Activated B cell treated with CpG ODN at 0.5 μM for 24 hours (primary cell): ENCODE measurements at regions of chr2 and their contacts with region 1.

Region 1: GRCh38 chr2:174577967-174578589 is 19.5 kb downstream of the WIPF1 start:
- DNase-seq: no peak
- ATAC-seq: peak; percentile 74
- H3K4me3 Mint-ChIP-seq: no peak overlapping the region
- H3K27ac Mint-ChIP-seq: peak overlapping the region; percentile 30
- H3K4me1 Mint-ChIP-seq: peaks cover 55% of the 10 kb centered on the region
- H3K27me3 Mint-ChIP-seq: no peaks in the 10 kb centered on the region
- CTCF ChIP-seq: peak; percentile 34

Region 2: GRCh38 chr2:174412256-174412655 is 165.8 kb before region 1 on chr2:
- CTCF ChIA-PET with region 1: no interaction called
- POLR2A ChIA-PET with region 1: no interaction called
- intact Hi-C with region 1: no loop called
- DNase-seq: no peak
- ATAC-seq: no peak
- H3K4me3 Mint-ChIP-seq: no peak overlapping the region
- H3K27ac Mint-ChIP-seq: no peak overlapping the region
- H3K4me1 Mint-ChIP-seq: no peaks in the 10 kb centered on the region
- H3K27me3 Mint-ChIP-seq: no peaks in the 10 kb centered on the region
- CTCF ChIP-seq: no peak

Region 3: GRCh38 chr2:174593574-174594203 is 15.6 kb after region 1 on chr2:
- CTCF ChIA-PET with region 1: interaction called, 69 read pairs
- POLR2A ChIA-PET with region 1: interaction called, 137 read pairs
- intact Hi-C with region 1: loop called (anchors 1 kb)
- DNase-seq: no peak
- ATAC-seq: peak; percentile 65
- H3K4me3 Mint-ChIP-seq: peak overlapping the region; percentile 98
- H3K27ac Mint-ChIP-seq: peak overlapping the region; percentile 99
- H3K4me1 Mint-ChIP-seq: peaks cover 78% of the 10 kb centered on the region
- H3K27me3 Mint-ChIP-seq: no peaks in the 10 kb centered on the region
- CTCF ChIP-seq: no peak

Region 4: DNA sequence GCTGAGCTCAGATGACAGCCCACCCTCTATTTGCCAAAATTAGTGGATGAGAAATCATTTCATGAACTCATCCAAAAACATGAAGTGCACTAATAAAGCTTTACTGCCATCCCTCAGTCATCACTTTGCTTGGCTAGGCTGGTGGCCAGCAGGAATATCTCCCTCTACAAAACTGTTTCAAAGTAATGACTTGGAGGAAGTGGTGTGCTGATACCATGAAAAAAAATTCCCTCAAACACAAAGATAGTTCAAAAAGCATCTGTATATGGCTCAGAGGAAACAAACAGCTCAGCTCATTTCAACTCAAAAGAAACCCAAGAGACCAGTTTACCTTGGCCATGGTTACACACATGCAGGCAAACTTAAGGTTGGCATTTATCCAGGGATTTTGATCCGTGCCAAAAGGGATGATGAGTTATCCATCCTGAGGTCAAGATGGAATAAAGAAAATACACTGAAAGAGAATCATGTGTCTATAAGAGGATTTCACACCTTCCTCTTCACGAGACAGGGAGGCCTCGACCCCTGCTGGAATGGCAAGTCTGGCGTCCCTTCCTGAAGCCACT is 37.9 kb after region 1 on chr2:
- CTCF ChIA-PET with region 1: interaction called, 16 read pairs
- POLR2A ChIA-PET with region 1: no interaction called
- intact Hi-C with region 1: loop called (anchors 5 kb)
- DNase-seq: no peak
- ATAC-seq: peak; percentile 18
- H3K4me3 Mint-ChIP-seq: peak overlapping the region; percentile 63
- H3K27ac Mint-ChIP-seq: peak overlapping the region; percentile 83
- H3K4me1 Mint-ChIP-seq: peaks cover 83% of the 10 kb centered on the region
- H3K27me3 Mint-ChIP-seq: no peaks in the 10 kb centered on the region
- CTCF ChIP-seq: no peak

Region 5: DNA sequence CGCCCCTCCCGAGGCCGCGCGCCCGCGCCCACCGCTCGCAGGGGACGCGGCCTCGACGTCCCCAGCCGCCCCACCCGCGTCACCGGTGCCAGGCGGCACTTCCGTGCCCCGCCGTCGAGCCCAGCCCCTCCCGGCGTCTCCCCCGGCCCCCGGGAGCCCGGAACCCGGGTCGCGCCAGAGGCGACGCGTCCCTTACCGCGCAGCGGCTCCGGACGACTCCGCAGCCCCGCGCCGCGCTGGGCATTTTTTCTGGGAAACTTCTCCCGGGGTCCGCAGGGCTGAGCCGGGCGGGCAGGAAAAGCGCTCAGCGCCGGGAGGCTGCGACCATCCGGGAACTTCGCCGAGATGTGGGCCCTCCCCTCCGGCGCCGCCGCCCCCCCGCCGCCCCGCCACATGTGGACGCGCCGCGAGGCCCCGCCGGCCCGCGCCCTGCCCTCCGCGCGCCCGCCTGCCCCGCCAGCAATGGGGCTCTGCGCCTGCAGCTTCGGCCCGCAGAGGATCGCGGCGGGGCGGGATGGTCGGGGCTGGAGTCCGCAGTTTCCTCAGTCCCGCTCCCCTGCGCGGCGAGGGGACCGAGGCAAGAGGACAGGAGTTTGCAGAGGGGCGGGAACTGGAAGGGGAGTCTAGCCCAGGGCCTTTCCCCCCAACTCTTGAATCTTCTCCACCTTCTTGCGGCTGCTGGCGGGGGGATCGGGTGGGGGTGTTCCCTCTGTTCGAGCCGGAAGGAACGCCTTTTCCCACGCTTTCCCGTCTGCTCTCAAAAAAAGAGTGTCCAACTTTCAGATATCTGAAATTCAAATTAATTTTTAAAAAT is 104.7 kb after region 1 on chr2:
- CTCF ChIA-PET with region 1: interaction called, 153 read pairs
- POLR2A ChIA-PET with region 1: interaction called, 5 read pairs
- intact Hi-C with region 1: loop called (anchors 1 kb)
- DNase-seq: peak; percentile 63
- ATAC-seq: peak; percentile 74
- H3K4me3 Mint-ChIP-seq: peak overlapping the region; percentile 90
- H3K27ac Mint-ChIP-seq: peak overlapping the region; percentile 83
- H3K4me1 Mint-ChIP-seq: peaks cover 16% of the 10 kb centered on the region
- H3K27me3 Mint-ChIP-seq: no peaks in the 10 kb centered on the region
- CTCF ChIP-seq: no peak

Region 6: DNA sequence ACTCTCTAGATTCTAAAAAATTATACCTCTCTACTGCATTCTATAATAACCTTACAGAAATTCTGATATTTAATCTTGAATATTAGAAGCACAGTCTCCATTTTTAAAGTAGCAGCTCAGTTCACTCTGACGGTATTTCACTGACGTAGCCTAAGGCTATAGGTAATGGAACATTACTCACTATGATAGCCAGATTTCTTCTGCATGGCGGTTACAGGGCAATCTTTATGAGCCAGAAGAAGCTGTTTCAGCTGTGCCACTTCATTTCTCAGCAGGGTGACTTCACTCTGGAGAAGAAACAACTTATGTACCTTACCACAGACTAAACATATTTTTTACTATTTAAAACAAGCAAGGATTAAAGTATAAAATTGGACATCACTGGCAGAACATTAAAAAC is 502.4 kb after region 1 on chr2:
- CTCF ChIA-PET with region 1: no interaction called
- POLR2A ChIA-PET with region 1: no interaction called
- intact Hi-C with region 1: no loop called
- DNase-seq: no peak
- ATAC-seq: no peak
- H3K4me3 Mint-ChIP-seq: no peak overlapping the region
- H3K27ac Mint-ChIP-seq: no peak overlapping the region
- H3K4me1 Mint-ChIP-seq: no peaks in the 10 kb centered on the region
- H3K27me3 Mint-ChIP-seq: no peaks in the 10 kb centered on the region
- CTCF ChIP-seq: no peak

Region 7: GRCh38 chr2:175167792-175168563 is 589.9 kb after region 1 on chr2 and contains the start of gene ATF2:
- CTCF ChIA-PET with region 1: no interaction called
- POLR2A ChIA-PET with region 1: no interaction called
- intact Hi-C with region 1: loop called (anchors 10 kb)
- DNase-seq: peak; percentile 87
- ATAC-seq: peak; percentile 92
- H3K4me3 Mint-ChIP-seq: peak within 1 kb of the TSS; percentile 100
- H3K27ac Mint-ChIP-seq: peak within 1 kb of the TSS; percentile 99
- H3K4me1 Mint-ChIP-seq: peaks cover 43% of the 10 kb centered on the region
- H3K27me3 Mint-ChIP-seq: no peaks in the 10 kb centered on the region
- CTCF ChIP-seq: no peak
- total RNA-seq, gene ATF2: 49.0 and 59.9 TPM in 2 replicates